A673 (cell line): ENCODE measurements at regions of chr17 and their contacts with region 1.

Region 1: DNA sequence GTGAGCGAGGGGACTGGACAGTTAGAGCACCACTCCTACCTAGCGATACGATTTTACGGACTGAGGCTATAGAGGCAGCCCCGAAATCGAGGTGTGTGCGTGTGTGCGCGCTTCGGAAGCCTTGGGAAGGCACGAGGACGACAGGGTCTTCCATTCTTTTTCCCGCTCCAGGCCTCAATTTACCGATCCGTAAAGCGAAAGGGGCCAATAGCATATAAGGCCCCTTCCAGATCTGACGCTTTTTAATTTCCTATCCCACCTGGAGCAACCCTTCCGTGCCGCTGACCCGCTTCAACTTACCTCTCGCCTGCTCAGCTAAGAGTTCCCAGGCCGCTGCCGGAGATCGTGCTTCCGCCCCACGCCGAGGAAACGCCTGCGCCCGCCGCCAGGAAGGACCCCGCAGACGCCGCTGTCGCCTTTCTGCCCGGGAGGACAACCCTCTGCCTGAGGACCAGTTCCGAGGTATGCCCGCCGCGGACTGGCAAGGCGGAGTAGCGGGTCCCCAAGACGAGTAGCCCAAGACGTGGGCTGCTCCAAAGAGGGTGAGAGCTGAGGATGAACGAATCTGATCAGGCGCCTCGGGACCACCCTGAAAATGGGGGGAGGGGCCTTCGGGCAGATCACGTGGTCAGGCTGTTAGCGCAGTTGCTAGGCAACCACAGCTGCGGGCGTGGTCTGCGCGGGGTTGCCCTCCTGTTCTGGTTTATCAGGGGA is at the start of gene EFTUD2:
- DNase-seq: peak; percentile 81
- H3K4me3 ChIP-seq: peak within 1 kb of the TSS; percentile 78
- H3K27ac ChIP-seq: peak within 1 kb of the TSS; percentile 99
- H3K4me1 ChIP-seq: peaks cover 18% of the 10 kb centered on the region
- H3K27me3 ChIP-seq: no peaks in the 10 kb centered on the region
- CTCF ChIP-seq: no peak
- total RNA-seq, gene EFTUD2: 133 and 144 TPM in 2 replicates

Region 2: GRCh38 chr17:45021607-45022287 is 122.5 kb after region 1 on chr17:
- CTCF ChIA-PET with region 1: interaction called, 17 read pairs
- POLR2A ChIA-PET with region 1: no interaction called
- intact Hi-C with region 1: no loop called
- DNase-seq: peak; percentile 60
- H3K4me3 ChIP-seq: peak overlapping the region; percentile 36
- H3K27ac ChIP-seq: no peak overlapping the region
- H3K4me1 ChIP-seq: no peaks in the 10 kb centered on the region
- H3K27me3 ChIP-seq: no peaks in the 10 kb centered on the region
- CTCF ChIP-seq: peak; percentile 55; the same call in 1 of the 2 replicates

Region 3: DNA sequence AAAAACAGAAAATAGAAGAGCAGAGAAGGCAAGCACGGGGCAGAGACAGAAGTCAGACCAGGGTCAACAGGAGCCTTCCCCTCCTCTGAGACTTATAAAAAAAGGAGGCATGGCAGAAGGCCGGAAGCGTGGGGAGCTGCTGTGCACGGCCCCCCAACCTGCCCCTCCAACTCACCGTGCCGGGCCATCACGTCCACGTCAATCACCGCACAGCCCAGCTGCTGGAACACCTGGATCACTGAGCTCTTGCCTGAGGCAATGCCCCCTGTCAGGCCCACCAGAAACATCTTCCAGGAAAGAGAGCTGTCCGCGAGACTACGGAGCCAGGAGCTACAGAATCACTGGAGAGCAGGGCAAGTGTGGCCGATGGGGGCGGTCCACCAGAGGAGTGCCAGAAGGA is 135.4 kb after region 1 on chr17:
- CTCF ChIA-PET with region 1: no interaction called
- POLR2A ChIA-PET with region 1: interaction called, 13 read pairs
- intact Hi-C with region 1: no loop called
- DNase-seq: no peak
- H3K4me3 ChIP-seq: no peak overlapping the region
- H3K27ac ChIP-seq: no peak overlapping the region
- H3K4me1 ChIP-seq: no peaks in the 10 kb centered on the region
- H3K27me3 ChIP-seq: no peaks in the 10 kb centered on the region
- CTCF ChIP-seq: no peak

Region 4: GRCh38 chr17:45234641-45235415 is 335.6 kb after region 1 on chr17:
- CTCF ChIA-PET with region 1: no interaction called
- POLR2A ChIA-PET with region 1: interaction called, 12 read pairs
- intact Hi-C with region 1: no loop called
- DNase-seq: no peak
- H3K4me3 ChIP-seq: no peak overlapping the region
- H3K27ac ChIP-seq: no peak overlapping the region
- H3K4me1 ChIP-seq: no peaks in the 10 kb centered on the region
- H3K27me3 ChIP-seq: no peaks in the 10 kb centered on the region
- CTCF ChIP-seq: peak; percentile 37; the same call in 1 of the 2 replicates